ENCODE measurements at regions of chr2 and their contacts with region 1.

Region 1: DNA sequence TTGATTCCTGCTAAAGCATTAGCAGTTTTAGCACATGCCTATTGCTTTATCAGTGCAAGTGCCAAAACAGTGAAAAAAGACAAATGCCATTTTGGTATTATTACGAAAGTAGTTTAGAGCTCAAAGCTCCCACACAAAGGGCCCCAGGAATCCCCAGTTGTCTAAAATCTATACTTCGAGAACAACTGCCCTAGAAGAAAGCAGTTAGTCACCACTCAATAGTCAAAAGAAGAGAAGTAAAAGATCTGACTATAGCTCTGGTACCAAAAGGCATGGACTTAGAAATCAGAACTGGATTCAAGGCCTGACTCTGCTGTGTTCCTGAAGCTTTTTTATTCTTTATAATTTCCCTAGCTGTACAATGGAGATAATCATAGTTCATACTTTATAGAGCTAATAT is 21.8 kb downstream of the SCN3A start:
- DNase-seq: no peak
- ATAC-seq: no peak
- H3K4me3 ChIP-seq: no peak overlapping the region
- H3K27ac ChIP-seq: no peak overlapping the region
- H3K4me1 ChIP-seq: no peaks in the 10 kb centered on the region
- H3K27me3 ChIP-seq: peaks cover 0 to 4% (median 0%) of the 10 kb centered on the region in 9 donors
- CTCF ChIP-seq: no peak
- POLR2A ChIP-seq: no peak

Region 2: DNA sequence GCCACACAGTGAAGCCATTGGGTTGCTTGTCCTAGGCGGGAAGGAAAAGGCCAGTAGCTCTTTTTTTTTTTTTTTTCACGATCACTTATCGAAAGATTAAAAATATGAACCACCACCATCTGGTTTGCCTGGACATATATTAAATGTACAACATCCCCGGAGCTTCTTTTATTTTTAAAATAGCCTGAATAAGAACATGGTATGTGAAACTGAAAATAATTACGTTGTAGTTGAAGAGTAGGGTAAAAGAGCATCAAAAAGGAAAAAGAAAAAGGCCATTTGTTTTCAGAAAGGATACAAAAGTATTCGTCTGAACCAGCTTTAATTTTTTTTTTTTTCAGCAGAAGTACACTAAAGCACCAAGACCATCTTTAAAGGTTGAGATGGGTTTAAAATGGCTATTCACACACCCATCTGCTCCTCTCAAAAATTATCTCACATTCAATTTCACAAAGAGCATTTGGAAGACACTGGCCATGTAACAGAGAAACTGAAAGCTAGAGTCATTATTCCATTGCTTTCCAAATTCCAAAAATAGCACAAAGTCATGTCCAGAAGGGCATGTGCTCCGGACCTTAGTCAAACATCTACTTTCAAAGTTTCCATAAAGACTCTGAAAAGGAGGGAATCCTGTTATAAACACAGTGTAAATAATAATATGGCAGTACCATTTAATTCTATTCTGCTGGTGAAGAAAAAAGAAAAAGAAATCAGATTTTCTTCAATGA is 61.1 kb before region 1 on chr2:
- intact Hi-C with region 1: loop called in 1 of 10 experiments (anchors 10 kb)
- DNase-seq: no peak
- ATAC-seq: peak in 3 of 4 donors; percentile 36 to 71 (median 67)
- H3K4me3 ChIP-seq: no peak overlapping the region
- H3K27ac ChIP-seq: peak overlapping the region in 7 of 12 donors; percentile 2 to 41 (median 21)
- H3K4me1 ChIP-seq: peaks cover 0 to 7% (median 0%) of the 10 kb centered on the region in 12 donors
- H3K27me3 ChIP-seq: no peaks in the 10 kb centered on the region
- CTCF ChIP-seq: no peak
- POLR2A ChIP-seq: no peak

Region 3: DNA sequence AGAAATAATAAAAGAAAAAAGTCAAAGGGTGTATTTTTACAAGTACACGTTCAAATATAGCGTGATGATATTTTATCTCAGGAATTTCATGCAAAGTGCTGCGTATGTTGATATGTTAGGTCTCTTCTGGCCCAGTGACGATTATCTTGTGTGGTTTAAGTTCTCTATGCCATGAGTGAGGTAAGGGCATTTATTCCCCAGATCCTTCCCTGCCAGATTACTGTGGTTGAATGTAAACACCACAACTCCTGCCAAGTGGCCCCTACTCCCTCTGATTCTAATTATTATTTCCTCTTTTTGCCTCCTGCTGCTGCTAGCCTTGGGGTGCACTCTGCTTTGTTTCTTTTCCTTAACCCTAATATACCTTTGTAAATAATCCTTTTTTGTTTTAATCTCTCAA is 69.3 kb after region 1 on chr2:
- intact Hi-C with region 1: no loop called
- DNase-seq: no peak
- ATAC-seq: no peak
- H3K4me3 ChIP-seq: no peak overlapping the region
- H3K27ac ChIP-seq: no peak overlapping the region
- H3K4me1 ChIP-seq: peaks cover 0 to 5% (median 0%) of the 10 kb centered on the region in 12 donors
- H3K27me3 ChIP-seq: no peaks in the 10 kb centered on the region
- CTCF ChIP-seq: no peak
- POLR2A ChIP-seq: no peak

Region 4: DNA sequence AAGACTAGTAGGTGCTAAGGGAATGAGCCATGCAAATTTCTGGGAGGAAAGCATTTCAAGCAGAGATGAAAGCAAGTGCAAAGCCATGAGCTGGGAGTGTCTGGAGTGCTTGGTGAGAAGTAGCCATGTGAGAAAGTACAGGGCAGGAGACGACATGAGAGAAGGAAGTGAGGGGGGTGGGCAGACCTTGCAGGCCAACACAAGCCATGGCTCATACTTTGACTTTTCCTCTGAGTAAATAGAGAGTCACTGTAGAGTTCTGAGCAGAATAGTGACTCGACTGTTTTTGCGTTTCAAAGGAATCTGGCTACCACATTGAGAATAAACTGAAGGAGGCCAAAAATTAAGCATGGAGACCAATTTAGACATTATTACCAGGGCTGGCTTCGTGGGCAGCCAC is 99.4 kb after region 1 on chr2:
- intact Hi-C with region 1: no loop called
- DNase-seq: no peak
- ATAC-seq: no peak
- H3K4me3 ChIP-seq: no peak overlapping the region
- H3K27ac ChIP-seq: no peak overlapping the region
- H3K4me1 ChIP-seq: no peaks in the 10 kb centered on the region
- H3K27me3 ChIP-seq: no peaks in the 10 kb centered on the region
- CTCF ChIP-seq: no peak
- POLR2A ChIP-seq: no peak